Sigmoid colon (tissue), 7 donors: ENCODE measurements at regions of chr19 and their contacts with region 1.

Region 1: DNA sequence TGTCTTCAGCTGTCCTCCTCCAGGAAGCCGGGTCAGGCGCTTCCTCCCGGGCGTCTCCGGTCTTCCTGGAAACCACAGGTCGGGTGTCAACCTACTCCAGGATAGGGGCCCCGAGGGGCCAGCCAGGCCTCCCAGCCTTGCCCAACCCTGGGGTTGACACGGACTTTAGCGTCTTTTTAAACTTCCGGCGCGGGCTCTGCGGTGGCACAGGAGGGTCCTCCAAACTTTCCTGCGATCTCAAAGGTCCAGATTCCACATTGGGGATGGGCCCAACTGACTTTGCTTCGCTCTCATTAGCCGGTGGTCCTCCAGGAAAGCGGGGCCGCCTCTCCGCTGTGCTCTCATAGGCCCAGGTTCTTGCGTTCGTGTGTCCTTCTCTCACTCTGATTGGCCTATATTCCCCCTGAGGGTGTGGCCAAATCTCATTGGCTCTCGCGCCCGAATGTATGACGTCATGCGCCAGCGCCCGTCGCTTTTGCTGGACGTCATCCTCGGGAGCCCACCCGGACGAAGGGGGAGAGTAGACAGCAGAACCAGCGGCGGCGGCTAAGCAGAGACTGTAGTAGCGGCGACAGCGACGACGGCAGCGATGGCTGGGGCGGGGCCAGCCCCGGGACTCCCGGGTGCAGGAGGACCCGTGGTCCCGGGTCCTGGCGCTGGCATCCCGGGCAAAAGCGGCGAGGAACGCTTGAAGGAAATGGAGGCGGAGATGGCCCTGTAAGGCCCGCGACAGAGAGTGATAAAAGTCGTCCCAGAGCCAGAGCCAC is at the start of gene RBM42:
- DNase-seq: peak; percentile 99
- H3K4me3 ChIP-seq: peak within 1 kb of the TSS; percentile 70 to 99 (median 86)
- H3K27ac ChIP-seq: peak within 1 kb of the TSS; percentile 90 to 98 (median 94)
- H3K4me1 ChIP-seq: peaks cover 0 to 22% (median 18%) of the 10 kb centered on the region in 4 donors
- H3K27me3 ChIP-seq: no peaks in the 10 kb centered on the region
- CTCF ChIP-seq: no peak
- EP300 ChIP-seq: peak in 2 of 4 donors; percentile 21 to 31
- POLR2A ChIP-seq: peak; percentile 55 to 66
- total RNA-seq, gene RBM42: 43.5 to 61.2 (median 53.2) TPM

Region 2: DNA sequence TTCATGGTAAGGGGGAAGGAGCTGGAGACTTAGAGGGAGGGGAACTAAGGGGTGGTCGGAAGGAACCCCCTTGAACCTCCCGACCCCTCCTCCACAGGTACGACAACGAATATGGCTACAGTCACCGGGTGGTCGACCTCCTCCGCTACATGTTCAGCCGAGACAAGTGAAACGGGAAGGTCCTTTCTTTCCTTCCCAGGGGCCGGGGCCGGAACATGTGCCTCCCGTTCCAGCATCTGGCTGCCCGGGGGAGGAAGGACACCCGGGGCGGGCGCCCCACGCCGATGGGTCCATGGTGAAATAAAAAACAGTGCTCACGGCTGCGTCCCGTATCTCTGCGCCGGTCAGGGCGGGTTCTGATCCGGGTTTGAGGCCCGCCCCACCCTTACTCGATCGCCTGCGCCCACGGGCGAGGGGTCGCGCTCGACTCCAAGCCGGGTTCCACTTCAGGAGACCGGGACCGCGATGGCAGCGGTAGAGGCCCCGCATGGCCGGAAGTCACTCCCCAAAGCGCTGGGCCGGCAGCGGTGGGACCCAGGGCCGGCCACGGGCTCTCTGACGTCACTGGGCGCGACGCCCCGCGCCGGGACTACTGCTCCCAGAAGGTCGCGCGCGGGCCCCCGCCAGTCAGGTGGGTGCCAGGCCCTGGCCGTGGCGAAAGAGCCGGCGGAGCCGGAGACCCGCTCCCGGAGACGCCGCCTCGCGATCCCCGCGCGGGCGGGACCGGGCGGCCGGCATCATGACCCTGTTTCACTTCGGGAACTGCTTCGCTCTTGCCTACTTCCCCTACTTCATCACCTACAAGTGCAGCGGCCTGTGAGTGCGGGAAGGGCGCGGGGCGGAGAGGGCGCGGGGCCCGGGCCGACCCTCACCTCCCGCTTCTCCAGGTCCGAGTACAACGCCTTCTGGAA is 83.5 kb before region 1 on chr19 and contains the start of gene TMEM147:
- intact Hi-C with region 1: loop called (anchors 5 kb)
- DNase-seq: peak; percentile 96
- H3K4me3 ChIP-seq: peak within 1 kb of the TSS; percentile 68 to 97 (median 90)
- H3K27ac ChIP-seq: peak within 1 kb of the TSS; percentile 79 to 90 (median 88)
- H3K4me1 ChIP-seq: peaks cover 0 to 29% (median 26%) of the 10 kb centered on the region in 4 donors
- H3K27me3 ChIP-seq: no peaks in the 10 kb centered on the region
- CTCF ChIP-seq: no peak
- EP300 ChIP-seq: peak in 1 of 4 donors; percentile 59
- POLR2A ChIP-seq: peak in 1 of 2 donors; percentile 23
- total RNA-seq, gene TMEM147: 60.1 to 72.5 (median 69.3) TPM